ENCODE measurements at regions of chr5 and their contacts with region 1.

Region 1: GRCh38 chr5:14142827-14143548 is at the start of gene TRIO:
- DNase-seq: peak; percentile 92 to 97 (median 96)
- ATAC-seq: peak; percentile 78
- H3K4me3 ChIP-seq: peak within 1 kb of the TSS; percentile 82
- H3K4me1 ChIP-seq: peaks cover 26% of the 10 kb centered on the region
- CTCF ChIP-seq: peak; percentile 54
- total RNA-seq, gene TRIO: 164 to 231 (median 168) TPM

Region 2: GRCh38 chr5:14190194-14191164 is 47.5 kb after region 1 on chr5:
- intact Hi-C with region 1: no loop called
- DNase-seq: no peak
- ATAC-seq: peak; percentile 78
- H3K4me3 ChIP-seq: no peak overlapping the region
- H3K4me1 ChIP-seq: peaks cover 16% of the 10 kb centered on the region
- CTCF ChIP-seq: no peak

Region 3: GRCh38 chr5:14208071-14209021 is 65.4 kb after region 1 on chr5:
- intact Hi-C with region 1: loop called (anchors 10 kb)
- DNase-seq: peak in 1 of 3 donors; percentile 72
- ATAC-seq: peak; percentile 65
- H3K4me3 ChIP-seq: no peak overlapping the region
- H3K4me1 ChIP-seq: peaks cover 75% of the 10 kb centered on the region
- CTCF ChIP-seq: no peak

Region 4: GRCh38 chr5:14264604-14265316 is 121.8 kb after region 1 on chr5:
- intact Hi-C with region 1: loop called in 1 of 2 experiments (anchors 10 kb)
- DNase-seq: peak; percentile 94 to 96 (median 96)
- ATAC-seq: peak; percentile 98
- H3K4me3 ChIP-seq: no peak overlapping the region
- H3K4me1 ChIP-seq: peaks cover 19% of the 10 kb centered on the region
- CTCF ChIP-seq: no peak